ENCODE measurements at regions of chr1 and their contacts with region 1.

Region 1: DNA sequence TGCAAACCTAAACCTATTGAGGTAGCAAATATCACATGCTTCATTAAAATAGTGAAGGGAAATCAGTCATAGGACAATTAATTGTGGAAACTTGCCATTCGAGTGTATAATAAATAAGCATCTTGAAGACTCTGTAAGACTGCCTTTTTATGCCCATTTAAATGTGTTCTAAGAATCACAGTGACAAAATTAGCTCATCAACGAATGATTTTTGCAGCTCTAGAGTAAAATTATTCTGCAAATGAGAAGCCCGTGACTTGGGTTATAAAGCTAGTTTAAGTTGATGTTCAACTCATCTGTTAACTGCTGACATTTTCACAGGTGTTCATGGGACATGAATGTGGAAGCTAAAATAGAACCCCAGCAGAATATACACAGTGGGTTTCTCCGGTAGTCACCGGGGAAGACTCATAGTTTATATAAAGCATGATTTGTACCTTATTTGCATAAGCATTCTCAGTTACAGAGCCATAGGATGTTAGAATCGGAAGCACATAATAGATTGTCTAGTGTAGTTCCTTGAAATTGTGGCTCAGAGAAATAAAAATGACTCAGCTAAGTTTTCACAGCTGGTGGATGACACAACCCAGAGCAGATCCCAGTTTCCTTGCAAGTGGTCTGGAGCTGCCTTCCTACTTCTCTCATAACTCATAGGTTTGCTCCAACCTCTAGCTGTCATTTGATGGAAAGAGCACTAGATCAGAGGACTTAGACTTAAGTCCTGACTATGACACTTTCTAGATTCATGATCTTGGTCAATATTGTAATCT is 107.3 kb downstream of the UCHL5 start:
- DNase-seq: peak; percentile 96
- H3K4me3 ChIP-seq: no peak overlapping the region
- H3K27ac ChIP-seq: peak overlapping the region; percentile 82
- H3K4me1 ChIP-seq: peaks cover 22% of the 10 kb centered on the region
- H3K27me3 ChIP-seq: no peaks in the 10 kb centered on the region
- CTCF ChIP-seq: no peak
- POLR2A ChIP-seq: peak; percentile 50

Region 2: GRCh38 chr1:192826791-192827477 is 124.9 kb before region 1 on chr1:
- CTCF ChIA-PET with region 1: no interaction called
- POLR2A ChIA-PET with region 1: no interaction called
- dilution Hi-C with region 1: no loop called
- intact Hi-C with region 1: loop called (anchors 1 kb)
- DNase-seq: peak; percentile 85
- H3K4me3 ChIP-seq: no peak overlapping the region
- H3K27ac ChIP-seq: peak overlapping the region; percentile 56
- H3K4me1 ChIP-seq: peaks cover 22% of the 10 kb centered on the region
- H3K27me3 ChIP-seq: no peaks in the 10 kb centered on the region
- CTCF ChIP-seq: no peak
- POLR2A ChIP-seq: no peak

Region 3: DNA sequence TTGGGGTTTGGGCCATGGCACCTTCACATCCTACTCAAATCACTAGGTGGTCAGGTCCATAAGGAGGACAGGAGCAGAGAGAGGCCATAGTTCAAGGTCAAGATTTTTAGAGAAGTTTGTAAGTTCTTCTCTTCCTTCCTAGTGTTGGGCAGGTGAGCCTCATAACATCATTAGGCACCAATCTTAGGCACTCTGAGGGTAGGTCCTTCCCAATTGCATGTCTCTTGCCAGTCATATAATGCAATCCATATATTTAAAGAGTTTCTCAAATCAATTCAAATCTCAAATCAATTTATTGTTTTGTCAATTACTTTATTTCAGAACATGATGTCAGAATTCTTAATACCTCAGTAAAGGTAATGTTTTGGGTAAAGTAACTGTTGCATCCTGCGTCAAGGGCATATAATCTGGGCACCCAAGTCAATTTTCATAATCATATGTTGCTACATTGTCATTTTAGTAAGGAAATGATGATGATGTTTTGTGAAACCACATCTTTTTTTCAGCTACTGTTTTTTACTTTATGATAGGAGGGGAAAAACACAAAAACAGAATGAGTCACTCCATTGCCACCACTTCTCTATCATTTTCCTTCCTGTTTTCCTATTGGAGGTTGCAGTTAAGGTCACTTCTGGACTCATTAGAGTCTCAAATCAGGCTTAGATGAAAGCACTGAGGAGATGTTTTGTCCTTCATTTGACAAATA is 15.4 kb before region 1 on chr1:
- CTCF ChIA-PET with region 1: interaction called, 5 read pairs
- POLR2A ChIA-PET with region 1: no interaction called
- dilution Hi-C with region 1: no loop called
- intact Hi-C with region 1: loop called (anchors 1 kb)
- DNase-seq: peak; percentile 84
- H3K4me3 ChIP-seq: no peak overlapping the region
- H3K27ac ChIP-seq: peak overlapping the region; percentile 20
- H3K4me1 ChIP-seq: peaks cover 18% of the 10 kb centered on the region
- H3K27me3 ChIP-seq: no peaks in the 10 kb centered on the region
- CTCF ChIP-seq: no peak
- POLR2A ChIP-seq: no peak

Region 4: DNA sequence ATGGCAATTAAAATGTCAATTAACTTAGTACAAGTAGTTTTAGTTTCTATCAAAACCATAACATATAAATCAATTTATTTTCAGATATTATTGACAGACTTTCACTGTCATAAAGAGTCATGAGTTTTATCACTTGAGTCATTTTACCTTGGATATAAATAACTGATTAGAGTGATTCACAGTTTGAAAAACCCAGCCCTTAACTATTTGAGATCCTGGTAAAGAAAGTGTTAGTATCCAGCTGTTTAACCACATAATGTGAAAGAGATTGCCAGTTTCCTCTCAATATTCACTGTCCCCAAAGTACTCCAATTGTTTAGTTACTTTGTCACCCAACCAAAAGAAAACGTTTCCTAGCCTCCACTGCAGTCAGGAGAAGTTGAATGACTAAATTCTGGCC is 16.0 kb after region 1 on chr1:
- CTCF ChIA-PET with region 1: interaction called, 6 read pairs
- POLR2A ChIA-PET with region 1: interaction called, 8 read pairs
- dilution Hi-C with region 1: no loop called
- intact Hi-C with region 1: loop called (anchors 1 kb)
- DNase-seq: peak; percentile 51
- H3K4me3 ChIP-seq: peak overlapping the region in 1 of 3 experiments; percentile 22
- H3K27ac ChIP-seq: peak overlapping the region; percentile 93
- H3K4me1 ChIP-seq: peaks cover 25% of the 10 kb centered on the region
- H3K27me3 ChIP-seq: no peaks in the 10 kb centered on the region
- CTCF ChIP-seq: no peak
- POLR2A ChIP-seq: no peak

Region 5: GRCh38 chr1:193121616-193122593 is 170.0 kb after region 1 on chr1 and contains the start of gene CDC73:
- CTCF ChIA-PET with region 1: no interaction called
- POLR2A ChIA-PET with region 1: no interaction called
- dilution Hi-C with region 1: no loop called
- intact Hi-C with region 1: loop called (anchors 10 kb)
- DNase-seq: peak; percentile 97
- H3K4me3 ChIP-seq: peak within 1 kb of the TSS; percentile 77 to 96 (median 86)
- H3K27ac ChIP-seq: peak within 1 kb of the TSS; percentile 61
- H3K4me1 ChIP-seq: peaks cover 20% of the 10 kb centered on the region
- H3K27me3 ChIP-seq: no peaks in the 10 kb centered on the region
- CTCF ChIP-seq: peak; percentile 95 to 98
- POLR2A ChIP-seq: peak; percentile 70
- total RNA-seq, gene CDC73: 55.3 and 55.8 TPM in 2 replicates